Activated T-helper 1 cell treated with anti-CD3 and anti-CD28 coated beads, Interleukin-12 subunit alpha, Interleukin-12 subunit beta, Interleukin-2, Interleukin-4 antibody, amounts not matched to agents 30 ng/mL and 10 ng/mL and 1 ng/mL, durations not matched to agents 14 hours and 24 hours and 36 hours (primary cell): ENCODE measurements at regions of chr14 and their contacts with region 1.

Region 1: DNA sequence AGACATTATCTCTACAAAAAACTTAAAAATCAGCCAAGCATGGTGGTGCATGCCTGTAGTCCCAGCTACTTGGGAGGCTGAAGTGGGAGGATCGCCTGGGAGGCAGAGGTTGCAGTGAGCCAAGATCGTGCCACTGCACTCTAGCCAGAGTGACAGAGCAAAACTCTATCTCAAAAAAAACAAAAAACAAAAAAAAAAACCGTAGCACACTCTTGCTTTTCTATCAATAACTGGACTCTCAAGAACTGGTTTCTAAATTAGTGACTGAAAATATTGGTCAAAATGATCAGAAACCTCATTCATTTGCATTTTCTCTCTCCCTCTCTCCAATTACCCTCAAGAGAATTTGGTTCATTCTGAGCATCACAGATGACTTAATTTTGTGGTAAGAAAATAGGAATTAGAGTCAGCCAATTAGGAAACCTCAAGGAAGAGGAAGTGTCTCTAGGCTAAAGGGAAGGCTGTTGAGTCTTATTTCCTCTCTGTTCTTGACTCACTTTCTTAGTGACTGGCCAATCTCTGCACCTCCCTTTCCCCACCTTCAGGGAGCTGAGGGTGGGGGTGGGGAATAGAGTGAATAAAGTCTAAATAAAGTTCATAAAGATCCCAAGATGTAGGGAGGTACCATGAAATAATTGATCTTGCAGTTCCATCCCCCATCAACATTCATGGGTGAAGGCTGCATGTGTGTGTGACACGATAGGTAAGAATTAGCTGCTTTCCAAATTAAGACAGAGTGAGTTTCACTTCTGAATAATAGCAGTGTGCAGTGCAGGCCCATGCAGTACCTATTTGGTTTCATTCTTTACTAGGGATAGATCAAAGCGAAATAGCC is 6.8 kb upstream of the PSMA6 start:
- DNase-seq: peak; percentile 17
- H3K4me3 Mint-ChIP-seq: peak overlapping the region; percentile 53
- H3K27ac Mint-ChIP-seq: peak overlapping the region; percentile 99
- H3K4me1 Mint-ChIP-seq: peaks cover 51% of the 10 kb centered on the region
- H3K27me3 Mint-ChIP-seq: no peaks in the 10 kb centered on the region

Region 2: GRCh38 chr14:34982417-34983147 is 302.8 kb before region 1 on chr14 and contains the start of gene SRP54:
- intact Hi-C with region 1: loop called (anchors 1 kb)
- DNase-seq: peak; percentile 100
- H3K4me3 Mint-ChIP-seq: no peak within 1 kb of the TSS
- H3K27ac Mint-ChIP-seq: no peak within 1 kb of the TSS
- H3K4me1 Mint-ChIP-seq: peaks cover 6% of the 10 kb centered on the region
- H3K27me3 Mint-ChIP-seq: no peaks in the 10 kb centered on the region
- total RNA-seq, gene SRP54: 76.1 and 76.2 TPM in 2 replicates

Region 3: GRCh38 chr14:35229495-35230089 is 55.8 kb before region 1 on chr14:
- intact Hi-C with region 1: loop called (anchors 1 kb)
- DNase-seq: no peak
- H3K4me3 Mint-ChIP-seq: no peak overlapping the region
- H3K27ac Mint-ChIP-seq: no peak overlapping the region
- H3K4me1 Mint-ChIP-seq: peaks cover 42% of the 10 kb centered on the region
- H3K27me3 Mint-ChIP-seq: no peaks in the 10 kb centered on the region

Region 4: GRCh38 chr14:35245051-35245450 is 40.3 kb before region 1 on chr14:
- intact Hi-C with region 1: no loop called
- DNase-seq: no peak
- H3K4me3 Mint-ChIP-seq: no peak overlapping the region
- H3K27ac Mint-ChIP-seq: no peak overlapping the region
- H3K4me1 Mint-ChIP-seq: peaks cover 37% of the 10 kb centered on the region
- H3K27me3 Mint-ChIP-seq: no peaks in the 10 kb centered on the region

Region 5: GRCh38 chr14:35301735-35302528 is 16.5 kb after region 1 on chr14:
- intact Hi-C with region 1: loop called (anchors 1 kb)
- DNase-seq: no peak
- H3K4me3 Mint-ChIP-seq: peak overlapping the region; percentile 37
- H3K27ac Mint-ChIP-seq: peak overlapping the region; percentile 89
- H3K4me1 Mint-ChIP-seq: peaks cover 43% of the 10 kb centered on the region
- H3K27me3 Mint-ChIP-seq: no peaks in the 10 kb centered on the region

Region 6: GRCh38 chr14:35365130-35366055 is 80.0 kb after region 1 on chr14:
- intact Hi-C with region 1: loop called (anchors 1 kb)
- DNase-seq: peak; percentile 52
- H3K4me3 Mint-ChIP-seq: peak overlapping the region; percentile 47
- H3K27ac Mint-ChIP-seq: peak overlapping the region; percentile 93
- H3K4me1 Mint-ChIP-seq: peaks cover 43% of the 10 kb centered on the region
- H3K27me3 Mint-ChIP-seq: no peaks in the 10 kb centered on the region

Region 7: DNA sequence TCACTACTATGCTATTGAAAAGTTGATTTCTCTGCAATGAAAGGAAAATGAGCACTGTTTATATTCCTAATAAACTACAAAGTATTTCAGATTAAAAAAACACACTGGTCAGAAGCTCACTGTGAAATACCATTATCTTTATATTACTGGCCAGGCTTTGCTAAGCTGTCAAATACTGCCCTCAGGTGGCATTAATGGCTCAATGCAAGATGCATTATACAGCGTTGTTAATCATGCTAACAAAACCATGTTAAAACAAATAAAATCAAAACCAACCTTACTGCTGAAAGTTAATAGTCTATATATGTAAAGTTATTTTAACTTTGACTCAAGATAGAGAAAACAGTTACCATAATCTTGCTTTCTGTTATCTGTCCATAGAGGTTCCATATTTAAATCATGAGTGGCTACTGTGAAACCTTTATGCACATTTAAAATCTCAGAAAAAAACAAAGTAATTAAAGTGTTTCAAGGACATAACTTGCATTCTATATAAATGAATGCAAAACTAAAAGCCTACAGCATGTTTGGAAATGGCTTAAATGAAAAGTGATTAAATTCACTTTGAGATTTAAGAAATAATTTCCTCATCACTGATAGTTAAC is 402.1 kb after region 1 on chr14:
- intact Hi-C with region 1: loop called (anchors 10 kb)
- DNase-seq: no peak
- H3K4me3 Mint-ChIP-seq: no peak overlapping the region
- H3K27ac Mint-ChIP-seq: no peak overlapping the region
- H3K4me1 Mint-ChIP-seq: peaks cover 25% of the 10 kb centered on the region
- H3K27me3 Mint-ChIP-seq: no peaks in the 10 kb centered on the region